Left lung (tissue), 14 donors: ENCODE measurements at regions of chr1 and their contacts with region 1.

Region 1: DNA sequence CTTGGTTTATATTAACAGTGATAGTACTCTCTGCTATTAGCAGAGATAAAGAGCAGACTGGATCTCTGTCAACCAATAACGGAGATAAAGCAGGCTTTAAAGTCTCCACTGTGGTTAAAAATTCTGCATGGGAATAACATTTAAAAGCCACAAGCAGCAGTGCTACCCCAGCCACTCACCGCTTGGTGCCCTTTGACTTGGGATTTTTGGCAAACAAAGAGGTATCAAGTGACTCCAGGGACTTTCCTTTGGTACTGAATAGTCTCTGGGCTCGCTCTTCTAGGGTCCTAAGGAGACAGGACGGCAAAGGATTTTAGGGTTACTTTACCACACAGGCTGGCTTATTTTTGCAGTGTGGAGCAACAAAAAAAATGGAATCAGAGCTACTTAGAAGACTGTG is 11.3 kb downstream of the SF3A3 start:
- DNase-seq: no peak
- ATAC-seq: no peak
- H3K4me3 ChIP-seq: no peak overlapping the region
- H3K27ac ChIP-seq: no peak overlapping the region
- H3K4me1 ChIP-seq: no peaks in the 10 kb centered on the region
- H3K27me3 ChIP-seq: no peaks in the 10 kb centered on the region
- CTCF ChIP-seq: no peak

Region 2: GRCh38 chr1:37883671-37884070 is 94.9 kb before region 1 on chr1:
- intact Hi-C with region 1: loop called in 1 of 2 experiments (anchors 10 kb)
- DNase-seq: no peak
- ATAC-seq: no peak
- H3K4me3 ChIP-seq: no peak overlapping the region
- H3K27ac ChIP-seq: no peak overlapping the region
- H3K4me1 ChIP-seq: no peaks in the 10 kb centered on the region
- H3K27me3 ChIP-seq: no peaks in the 10 kb centered on the region
- CTCF ChIP-seq: no peak